PC-9 (cell line): ENCODE measurements at regions of chr9 and their contacts with region 1.

Region 1: DNA sequence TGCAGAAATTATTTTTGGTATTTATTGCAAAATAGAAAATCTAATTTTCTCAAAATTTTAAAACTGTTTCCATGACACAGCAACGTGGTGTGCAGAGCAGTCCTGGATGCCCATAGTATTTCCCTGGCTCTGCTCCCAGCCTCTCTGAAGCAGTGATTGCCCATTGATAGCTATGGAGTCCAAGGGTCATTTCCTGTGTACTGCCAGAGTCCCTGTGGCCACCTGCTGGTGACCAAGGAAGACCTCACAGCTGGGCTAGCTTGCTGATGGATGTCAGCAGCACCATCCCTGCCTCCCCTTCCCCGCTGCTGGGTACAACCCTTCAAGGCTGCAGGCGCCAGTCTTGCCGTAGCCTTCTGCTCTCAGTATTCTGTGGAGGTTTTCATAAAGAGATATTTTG is 184.1 kb downstream of the DIRAS2 start:
- DNase-seq: peak; percentile 24 to 65
- H3K4me3 ChIP-seq: no peak overlapping the region
- H3K27ac ChIP-seq: no peak overlapping the region
- H3K4me1 ChIP-seq: peaks cover 10% of the 10 kb centered on the region; the same call in 1 of the 2 replicates
- H3K27me3 ChIP-seq: no peaks in the 10 kb centered on the region
- CTCF ChIP-seq: no peak; the same call in 1 of the 2 replicates

Region 2: GRCh38 chr9:90441814-90442213 is 16.7 kb before region 1 on chr9:
- CTCF ChIA-PET with region 1: no interaction called
- POLR2A ChIA-PET with region 1: no interaction called
- intact Hi-C with region 1: loop called (anchors 1 kb)
- DNase-seq: peak; percentile 60 to 96
- H3K4me3 ChIP-seq: no peak overlapping the region
- H3K27ac ChIP-seq: peak overlapping the region; percentile 43
- H3K4me1 ChIP-seq: peaks cover 27% of the 10 kb centered on the region
- H3K27me3 ChIP-seq: no peaks in the 10 kb centered on the region
- CTCF ChIP-seq: no peak